MCF 10A (cell line): ENCODE measurements at regions of chr1 and their contacts with region 1.

Region 1: DNA sequence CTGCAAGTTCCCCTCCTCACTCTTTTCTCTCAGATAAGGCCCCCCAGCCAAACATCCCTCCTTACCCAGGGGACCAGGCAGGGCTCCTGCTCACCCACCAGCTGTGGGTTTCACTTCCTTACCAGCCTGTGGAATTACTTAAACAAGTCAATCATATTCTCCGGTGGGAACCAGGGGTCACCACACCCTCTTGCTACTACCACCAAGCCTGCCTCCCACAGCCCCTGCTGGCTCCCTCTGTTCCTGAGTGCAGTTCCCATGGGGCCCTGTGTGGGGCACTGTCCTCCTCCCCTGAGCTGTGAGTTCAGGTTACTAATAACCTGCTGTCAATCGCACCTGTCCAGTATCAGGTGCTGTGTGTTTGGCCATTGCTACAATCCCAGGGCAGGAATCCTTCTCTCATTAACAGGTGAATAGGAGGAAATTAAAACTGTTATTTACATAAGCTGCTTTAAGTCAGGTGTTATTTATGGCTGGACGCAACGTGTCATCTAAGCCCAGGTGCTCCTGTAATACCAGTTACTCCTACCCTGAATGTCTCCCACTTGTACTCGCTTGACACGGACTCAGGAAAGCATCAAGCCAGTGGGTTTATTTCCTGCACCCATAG is 53.1 kb upstream of the LBR start:
- DNase-seq: peak; percentile 85
- H3K4me3 Mint-ChIP-seq: no peak overlapping the region
- H3K27ac Mint-ChIP-seq: no peak overlapping the region
- H3K4me1 Mint-ChIP-seq: peaks cover 7% of the 10 kb centered on the region
- H3K27me3 Mint-ChIP-seq: peaks cover 15% of the 10 kb centered on the region
- CTCF ChIP-seq: peak; percentile 100

Region 2: DNA sequence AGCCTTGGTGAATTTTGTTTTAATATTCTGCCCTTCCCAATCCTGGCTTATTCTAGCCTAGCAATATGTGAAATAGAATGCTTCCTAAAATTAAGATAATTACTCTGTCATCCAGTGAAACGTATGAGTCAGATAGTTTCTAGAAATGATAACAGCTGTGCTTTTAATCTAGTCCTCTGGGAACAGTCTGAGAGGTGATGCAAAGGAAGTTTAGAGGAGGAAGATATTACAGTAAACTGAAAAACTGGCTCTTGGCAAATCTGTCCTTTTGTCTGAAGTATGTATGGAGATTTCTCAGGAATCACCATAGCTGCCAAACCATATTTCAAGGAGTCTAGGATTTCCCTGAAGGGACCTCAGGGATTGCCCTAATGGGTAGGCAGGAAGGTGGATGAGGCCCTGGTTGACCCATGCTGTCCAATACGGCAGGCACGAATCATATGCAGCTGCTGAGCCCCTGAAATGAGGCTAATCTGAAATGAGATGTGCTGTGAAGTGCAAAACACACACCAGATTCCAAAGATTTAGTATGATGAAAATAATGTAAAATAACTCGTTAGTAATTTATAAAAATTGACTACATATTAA is 17.7 kb after region 1 on chr1:
- CTCF ChIA-PET with region 1: interaction called, 37 read pairs
- POLR2A ChIA-PET with region 1: interaction called, 6 read pairs
- intact Hi-C with region 1: no loop called
- DNase-seq: no peak
- H3K4me3 Mint-ChIP-seq: no peak overlapping the region
- H3K27ac Mint-ChIP-seq: no peak overlapping the region
- H3K4me1 Mint-ChIP-seq: no peaks in the 10 kb centered on the region
- H3K27me3 Mint-ChIP-seq: no peaks in the 10 kb centered on the region
- CTCF ChIP-seq: no peak